ENCODE measurements at regions of chr1 and their contacts with region 1.

Region 1: DNA sequence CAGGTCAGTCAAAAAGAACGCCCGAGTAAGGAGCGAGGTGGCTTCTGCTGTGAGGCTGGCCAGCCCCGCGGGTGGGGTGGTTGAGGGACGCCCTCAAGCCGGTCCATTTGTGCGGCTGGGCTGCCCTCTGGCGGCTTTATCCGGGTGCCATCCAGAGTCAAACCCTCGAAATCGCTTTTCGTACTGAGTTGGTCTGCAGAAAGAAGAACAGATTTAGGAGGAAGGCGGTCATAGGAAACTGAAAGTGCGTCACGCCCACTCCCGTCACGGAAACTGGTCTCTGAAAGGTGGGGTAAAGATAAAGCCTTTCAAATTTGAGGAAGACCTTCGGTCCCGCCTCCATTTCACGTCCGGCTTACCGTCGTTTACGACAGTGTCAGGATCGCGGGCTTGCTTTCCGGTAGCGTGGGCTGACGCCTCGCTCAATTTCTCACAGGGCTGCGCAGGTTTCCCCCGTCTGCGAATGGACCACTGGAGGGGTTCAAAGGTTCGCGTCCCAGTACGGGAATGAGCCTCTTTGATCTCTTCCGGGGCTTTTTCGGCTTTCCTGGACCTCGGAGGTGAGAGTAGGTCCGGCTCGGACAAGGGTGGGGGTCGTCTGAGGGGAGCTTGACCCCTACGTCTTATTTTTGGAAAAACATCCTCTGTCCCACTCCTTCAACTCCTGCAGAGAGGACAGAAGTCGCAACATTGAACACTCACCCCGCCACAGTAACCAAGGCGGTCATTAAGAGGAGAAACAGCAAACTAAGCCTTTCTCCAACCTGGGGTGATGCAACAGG is at the start of gene HAX1:
- DNase-seq: peak; percentile 64 to 91
- H3K4me3 ChIP-seq: peak within 1 kb of the TSS; percentile 89 to 98 (median 94)
- H3K27ac ChIP-seq: peak within 1 kb of the TSS; percentile 81; the same call in 1 of the 2 replicates
- H3K4me1 ChIP-seq: peaks cover 0 to 5% (median 0%) of the 10 kb centered on the region in 4 experiments; a peak in 2 of 7 replicates
- H3K27me3 ChIP-seq: no peaks in the 10 kb centered on the region
- CTCF ChIP-seq: peak; percentile 73 to 85 (median 78)
- EP300 ChIP-seq: no peak
- POLR2A ChIP-seq: peak in 1 of 2 experiments; percentile 53; a peak in 2 of 3 replicates
- RAD21 ChIP-seq: peak; percentile 80 to 84
- total RNA-seq, gene HAX1: 73.7 and 82.2 TPM in 2 replicates

Region 2: GRCh38 chr1:154198756-154199562 is 73.4 kb before region 1 on chr1:
- CTCF ChIA-PET with region 1: interaction called, 17 read pairs
- POLR2A ChIA-PET with region 1: interaction called, 3 read pairs
- DNase-seq: peak in 1 of 2 experiments; percentile 51
- H3K4me3 ChIP-seq: no peak overlapping the region; a peak in 1 of 8 replicates
- H3K27ac ChIP-seq: no peak overlapping the region
- H3K4me1 ChIP-seq: peaks cover 0 to 7% (median 2%) of the 10 kb centered on the region in 4 experiments; a peak in 1 of 7 replicates
- H3K27me3 ChIP-seq: no peaks in the 10 kb centered on the region
- CTCF ChIP-seq: peak; percentile 3 to 63 (median 49); a peak in 3 of 4 replicates
- EP300 ChIP-seq: no peak
- POLR2A ChIP-seq: no peak
- RAD21 ChIP-seq: peak; percentile 56 to 71

Region 3: GRCh38 chr1:154258784-154259183 is 13.6 kb before region 1 on chr1:
- CTCF ChIA-PET with region 1: interaction called, 15 read pairs
- POLR2A ChIA-PET with region 1: interaction called, 3 read pairs
- DNase-seq: no peak
- H3K4me3 ChIP-seq: no peak overlapping the region
- H3K27ac ChIP-seq: no peak overlapping the region
- H3K4me1 ChIP-seq: no peaks in the 10 kb centered on the region
- H3K27me3 ChIP-seq: no peaks in the 10 kb centered on the region
- CTCF ChIP-seq: no peak
- EP300 ChIP-seq: no peak
- POLR2A ChIP-seq: no peak
- RAD21 ChIP-seq: no peak

Region 4: DNA sequence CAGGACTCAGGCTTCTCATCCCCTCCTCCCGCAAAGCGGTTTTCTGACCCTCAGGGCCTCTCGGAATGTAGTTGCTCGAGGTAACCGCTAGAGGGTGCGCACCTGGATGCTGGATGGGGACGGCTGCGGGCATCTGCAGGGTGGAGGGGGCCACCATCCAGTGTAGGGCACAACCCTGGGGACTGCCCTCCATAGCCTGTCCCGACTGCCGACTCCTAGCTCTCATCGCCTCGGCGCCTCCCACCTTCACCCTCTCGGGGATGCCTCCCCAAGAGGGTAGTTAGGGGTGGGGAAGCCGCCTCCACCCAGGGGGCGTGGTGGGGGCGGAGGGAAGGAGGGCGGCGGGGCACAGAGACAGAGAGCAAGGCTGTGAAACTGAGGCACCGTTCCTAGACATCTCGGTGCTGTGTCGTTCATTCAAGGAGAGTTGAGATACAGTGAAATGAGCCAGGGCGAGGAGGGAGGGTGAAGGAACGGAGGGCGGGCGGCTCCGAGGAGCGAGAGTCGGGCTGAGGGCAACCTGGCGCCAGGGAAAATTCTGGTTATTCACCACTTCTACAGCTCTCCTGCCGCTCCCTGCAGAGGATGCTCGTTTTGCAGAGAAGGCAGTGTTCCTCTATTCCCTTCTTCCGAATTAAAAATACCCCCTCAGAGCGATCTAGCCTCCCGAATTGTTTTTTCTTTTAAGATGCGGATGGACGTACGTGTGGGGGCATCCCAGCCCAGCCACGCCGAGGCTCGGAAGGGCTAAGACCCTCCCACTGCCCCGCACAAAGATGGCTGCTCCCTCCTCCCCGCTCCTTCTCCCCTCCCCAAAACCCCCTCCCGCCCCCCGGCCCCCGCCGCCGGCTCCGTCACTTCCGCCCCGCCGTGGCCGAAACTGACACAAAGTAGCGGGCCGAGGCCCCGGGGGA is 52.5 kb after region 1 on chr1 and contains the start of gene ATP8B2:
- CTCF ChIA-PET with region 1: interaction called, 84 read pairs
- POLR2A ChIA-PET with region 1: interaction called, 11 read pairs
- DNase-seq: peak; percentile 54 to 93
- H3K4me3 ChIP-seq: peak within 1 kb of the TSS; percentile 66 to 89 (median 86)
- H3K27ac ChIP-seq: peak within 1 kb of the TSS; percentile 35; the same call in 1 of the 2 replicates
- H3K4me1 ChIP-seq: peaks cover 23 to 25% (median 23%) of the 10 kb centered on the region in 4 experiments
- H3K27me3 ChIP-seq: no peaks in the 10 kb centered on the region
- CTCF ChIP-seq: peak; percentile 86 to 92 (median 92)
- EP300 ChIP-seq: no peak
- POLR2A ChIP-seq: no peak
- RAD21 ChIP-seq: peak; percentile 43 to 51; a peak in 3 of 4 replicates
- total RNA-seq, gene ATP8B2: 59.3 and 61.4 TPM in 2 replicates

Region 5: GRCh38 chr1:154344977-154345837 is 72.8 kb after region 1 on chr1:
- CTCF ChIA-PET with region 1: interaction called, 11 read pairs
- POLR2A ChIA-PET with region 1: no interaction called
- DNase-seq: peak in 1 of 2 experiments; percentile 86
- H3K4me3 ChIP-seq: no peak overlapping the region
- H3K27ac ChIP-seq: no peak overlapping the region
- H3K4me1 ChIP-seq: peaks cover 0 to 2% (median 0%) of the 10 kb centered on the region in 4 experiments; a peak in 2 of 7 replicates
- H3K27me3 ChIP-seq: no peaks in the 10 kb centered on the region
- CTCF ChIP-seq: peak in 2 of 3 experiments; percentile 80 to 95; a peak in 3 of 4 replicates
- EP300 ChIP-seq: no peak
- POLR2A ChIP-seq: no peak
- RAD21 ChIP-seq: peak; percentile 65 to 80

Region 6: GRCh38 chr1:154726443-154726842 is 454.0 kb after region 1 on chr1:
- CTCF ChIA-PET with region 1: no interaction called
- POLR2A ChIA-PET with region 1: no interaction called
- DNase-seq: no peak
- H3K4me3 ChIP-seq: no peak overlapping the region
- H3K27ac ChIP-seq: no peak overlapping the region
- H3K4me1 ChIP-seq: peaks cover 3 to 17% (median 8%) of the 10 kb centered on the region in 4 experiments; a peak in 6 of 7 replicates
- H3K27me3 ChIP-seq: no peaks in the 10 kb centered on the region
- CTCF ChIP-seq: no peak
- EP300 ChIP-seq: no peak
- POLR2A ChIP-seq: no peak
- RAD21 ChIP-seq: no peak